GM12878 (cell line): ENCODE measurements at regions of chr20 and their contacts with region 1.

Region 1: DNA sequence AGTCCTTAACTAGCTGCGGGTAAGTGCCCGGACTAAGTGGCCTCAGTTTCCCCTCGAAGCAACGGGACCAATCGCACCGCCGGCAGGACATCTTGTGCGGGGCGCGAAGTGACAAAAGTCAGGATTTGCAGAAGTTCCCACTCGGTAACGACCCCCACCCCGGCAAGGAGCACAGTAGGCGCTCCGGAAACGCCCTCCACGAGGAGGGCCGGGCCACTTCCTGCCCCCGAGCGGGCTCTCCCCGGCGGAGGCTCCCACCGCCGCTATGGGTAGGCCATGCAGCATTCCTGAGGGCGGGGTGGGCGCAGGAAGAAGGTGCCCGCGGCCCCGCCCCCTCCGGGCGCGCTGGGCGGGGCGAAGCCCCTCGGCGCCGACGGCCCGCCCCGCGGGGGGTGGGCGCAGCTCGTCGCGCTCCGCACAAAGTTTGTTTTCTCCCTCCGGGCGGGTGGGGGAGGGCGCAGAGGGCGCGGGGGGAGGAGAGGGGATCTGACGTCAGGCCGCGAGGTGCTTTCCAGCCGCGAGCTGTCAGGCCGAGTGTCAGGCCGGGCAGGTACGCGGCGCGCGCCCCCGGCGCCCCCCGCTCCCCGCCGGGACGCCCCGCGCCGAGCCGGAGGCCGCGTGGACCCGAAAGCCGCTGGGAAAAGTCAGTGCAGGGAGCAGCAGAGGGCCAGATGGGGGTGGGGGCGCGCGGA is at the start of gene TGIF2:
- DNase-seq: peak; percentile 48
- ATAC-seq: peak; percentile 81
- H3K4me3 ChIP-seq: peak within 1 kb of the TSS; percentile 94
- H3K27ac ChIP-seq: peak within 1 kb of the TSS; percentile 96
- H3K4me1 ChIP-seq: peaks cover 5% of the 10 kb centered on the region
- H3K27me3 ChIP-seq: no peaks in the 10 kb centered on the region
- CTCF ChIP-seq: no peak
- EP300 ChIP-seq: 0 out of 4 replicates have a peak, but pooled peaks of 1 of the 2 experiments have one; percentile 27
- POLR2A ChIP-seq: peak; percentile 85
- RAD21 ChIP-seq: no peak
- polyA plus RNA-seq, gene TGIF2: 13.1 to 26.4 TPM

Region 2: GRCh38 chr20:36407199-36407733 is 166.0 kb before region 1 on chr20:
- CTCF ChIA-PET with region 1: no interaction called
- POLR2A ChIA-PET with region 1: no interaction called
- RAD21 ChIA-PET with region 1: no interaction called
- SMC1A ChIA-PET with region 1: no interaction called
- in situ Hi-C with region 1: no loop called
- intact Hi-C with region 1: no loop called
- DNase-seq: no peak
- ATAC-seq: no peak
- H3K4me3 ChIP-seq: no peak overlapping the region
- H3K27ac ChIP-seq: no peak overlapping the region
- H3K4me1 ChIP-seq: no peaks in the 10 kb centered on the region
- H3K27me3 ChIP-seq: no peaks in the 10 kb centered on the region
- CTCF ChIP-seq: no peak
- EP300 ChIP-seq: no peak
- POLR2A ChIP-seq: no peak
- RAD21 ChIP-seq: no peak

Region 3: GRCh38 chr20:36527331-36528125 is 45.7 kb before region 1 on chr20:
- CTCF ChIA-PET with region 1: no interaction called
- POLR2A ChIA-PET with region 1: no interaction called
- RAD21 ChIA-PET with region 1: no interaction called
- SMC1A ChIA-PET with region 1: no interaction called
- in situ Hi-C with region 1: no loop called
- intact Hi-C with region 1: no loop called
- DNase-seq: no peak
- ATAC-seq: no peak
- H3K4me3 ChIP-seq: no peak overlapping the region
- H3K27ac ChIP-seq: no peak overlapping the region
- H3K4me1 ChIP-seq: peaks cover 5% of the 10 kb centered on the region; the same call in 1 of the 2 replicates
- H3K27me3 ChIP-seq: no peaks in the 10 kb centered on the region
- CTCF ChIP-seq: no peak
- EP300 ChIP-seq: no peak
- POLR2A ChIP-seq: no peak
- RAD21 ChIP-seq: no peak

Region 4: GRCh38 chr20:36562724-36563123 is 10.5 kb before region 1 on chr20:
- CTCF ChIA-PET with region 1: interaction called, 6 read pairs
- POLR2A ChIA-PET with region 1: interaction called, 9 read pairs
- RAD21 ChIA-PET with region 1: interaction called, 4 read pairs
- SMC1A ChIA-PET with region 1: interaction called, 13 read pairs
- in situ Hi-C with region 1: no loop called
- intact Hi-C with region 1: no loop called
- DNase-seq: no peak
- ATAC-seq: no peak
- H3K4me3 ChIP-seq: no peak overlapping the region
- H3K27ac ChIP-seq: no peak overlapping the region
- H3K4me1 ChIP-seq: no peaks in the 10 kb centered on the region
- H3K27me3 ChIP-seq: no peaks in the 10 kb centered on the region
- CTCF ChIP-seq: no peak
- EP300 ChIP-seq: no peak
- POLR2A ChIP-seq: no peak
- RAD21 ChIP-seq: no peak

Region 5: DNA sequence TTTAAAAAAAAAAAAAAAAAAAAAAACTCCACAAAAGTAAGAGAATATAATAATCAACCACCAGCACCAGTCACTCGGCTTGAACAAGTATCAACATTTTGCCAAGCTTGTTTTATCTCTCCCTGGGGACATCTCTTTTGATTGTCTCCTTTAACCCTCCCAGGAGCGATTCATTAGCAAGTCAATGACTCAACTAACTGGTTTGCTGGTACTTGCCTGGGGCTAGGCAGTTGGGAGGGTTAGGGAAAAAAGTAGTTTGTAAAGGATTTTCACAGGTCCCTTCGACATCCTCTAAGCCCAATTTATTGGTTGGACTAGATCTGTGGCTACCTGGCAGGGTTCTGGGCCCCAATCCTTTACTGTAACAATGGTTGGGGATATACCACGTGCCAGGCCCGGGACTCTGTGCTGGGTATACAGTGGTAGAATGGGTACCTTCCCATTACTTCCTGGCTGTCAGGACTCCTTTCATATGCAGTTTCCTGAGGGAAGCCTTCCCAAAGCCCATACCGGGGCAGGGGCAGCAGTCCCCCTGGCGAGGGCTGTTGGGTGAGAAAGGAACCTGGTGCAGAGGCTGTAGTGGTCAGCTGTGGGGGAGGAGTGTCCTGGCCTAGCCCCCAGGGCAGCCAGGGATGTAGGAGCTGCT is 12.3 kb after region 1 on chr20:
- CTCF ChIA-PET with region 1: interaction called, 65 read pairs
- POLR2A ChIA-PET with region 1: interaction called, 46 read pairs
- RAD21 ChIA-PET with region 1: interaction called, 10 read pairs
- SMC1A ChIA-PET with region 1: interaction called, 98 read pairs
- in situ Hi-C with region 1: no loop called
- intact Hi-C with region 1: no loop called
- DNase-seq: no peak
- ATAC-seq: no peak
- H3K4me3 ChIP-seq: no peak overlapping the region
- H3K27ac ChIP-seq: no peak overlapping the region
- H3K4me1 ChIP-seq: peaks cover 5% of the 10 kb centered on the region
- H3K27me3 ChIP-seq: no peaks in the 10 kb centered on the region
- CTCF ChIP-seq: no peak
- EP300 ChIP-seq: no peak
- POLR2A ChIP-seq: no peak; the same call in 1 of the 2 replicates
- RAD21 ChIP-seq: no peak

Region 6: DNA sequence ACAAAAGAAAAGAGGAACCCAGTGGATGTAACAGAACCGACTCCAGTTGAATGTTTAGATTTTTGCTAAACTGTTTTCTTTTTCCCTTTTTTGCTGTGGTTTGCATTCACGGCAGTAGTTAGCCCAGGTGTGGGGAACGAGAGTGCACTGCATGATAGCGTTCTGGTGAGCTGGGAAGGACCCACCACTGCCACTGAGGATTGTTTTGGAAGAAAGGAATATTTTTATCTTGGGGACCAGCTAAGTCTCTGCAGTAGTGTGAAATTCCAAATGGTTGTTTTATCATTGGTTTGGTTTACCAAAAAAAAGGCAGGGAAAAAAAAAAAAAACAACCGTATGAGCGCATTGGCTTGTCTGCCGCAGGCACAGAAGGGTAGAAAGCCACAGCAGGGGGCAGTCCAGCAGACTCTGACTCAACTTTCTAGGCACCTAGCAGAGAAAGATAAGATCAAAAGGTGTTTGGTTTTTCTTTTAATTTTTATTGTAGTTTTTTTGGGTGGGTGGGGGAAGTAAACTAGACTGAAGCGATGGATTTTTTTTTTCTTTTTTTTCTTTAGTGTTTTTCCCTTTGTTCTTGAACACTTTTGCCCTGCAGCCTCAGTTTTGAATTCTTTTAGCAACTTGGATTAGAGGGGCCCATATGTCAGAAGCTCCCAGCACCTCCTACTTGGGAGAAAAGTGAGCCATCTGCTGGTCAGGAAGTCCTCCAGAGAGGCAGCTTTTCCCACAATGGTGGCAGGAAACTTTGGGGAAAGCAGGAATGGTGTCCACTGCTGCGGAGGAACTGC is 18.8 kb after region 1 on chr20:
- CTCF ChIA-PET with region 1: interaction called, 65 read pairs
- POLR2A ChIA-PET with region 1: interaction called, 87 read pairs
- RAD21 ChIA-PET with region 1: interaction called, 93 read pairs
- SMC1A ChIA-PET with region 1: interaction called, 98 read pairs
- in situ Hi-C with region 1: no loop called
- intact Hi-C with region 1: loop called (anchors 2 kb)
- DNase-seq: no peak
- ATAC-seq: no peak
- H3K4me3 ChIP-seq: no peak overlapping the region
- H3K27ac ChIP-seq: no peak overlapping the region
- H3K4me1 ChIP-seq: peaks cover 41% of the 10 kb centered on the region
- H3K27me3 ChIP-seq: no peaks in the 10 kb centered on the region
- CTCF ChIP-seq: peak in 2 of 3 experiments; percentile 23 to 43; a peak in 3 of 6 replicates
- EP300 ChIP-seq: no peak
- POLR2A ChIP-seq: no peak
- RAD21 ChIP-seq: no peak

Region 7: GRCh38 chr20:36599912-36600345 is 26.7 kb after region 1 on chr20:
- CTCF ChIA-PET with region 1: interaction called, 94 read pairs
- POLR2A ChIA-PET with region 1: interaction called, 87 read pairs
- RAD21 ChIA-PET with region 1: interaction called, 93 read pairs
- SMC1A ChIA-PET with region 1: interaction called, 98 read pairs
- in situ Hi-C with region 1: no loop called
- intact Hi-C with region 1: loop called (anchors 1 kb)
- DNase-seq: peak; percentile 40
- ATAC-seq: peak; percentile 20
- H3K4me3 ChIP-seq: no peak overlapping the region
- H3K27ac ChIP-seq: peak overlapping the region; percentile 80
- H3K4me1 ChIP-seq: peaks cover 43% of the 10 kb centered on the region
- H3K27me3 ChIP-seq: no peaks in the 10 kb centered on the region
- CTCF ChIP-seq: no peak
- EP300 ChIP-seq: no peak
- POLR2A ChIP-seq: no peak
- RAD21 ChIP-seq: no peak

Region 8: DNA sequence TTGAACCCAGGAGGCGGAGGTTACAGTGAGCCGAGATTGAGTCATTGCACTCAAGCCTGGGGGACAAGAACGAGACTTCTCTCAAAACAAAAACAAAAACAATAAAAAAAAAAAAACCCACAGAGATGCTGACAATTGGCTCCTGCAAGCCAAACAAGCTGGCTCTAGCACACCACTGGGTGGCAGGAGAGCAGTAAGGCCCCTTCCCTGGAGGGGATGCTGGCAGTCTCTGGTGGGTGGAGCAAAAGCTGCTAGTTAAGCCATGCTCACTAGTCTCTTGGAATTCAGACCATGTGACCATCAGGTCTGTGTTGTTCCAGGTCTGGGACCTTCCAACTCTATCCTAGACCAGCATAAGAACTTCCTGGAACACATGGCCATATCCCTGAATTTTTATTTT is 219.2 kb after region 1 on chr20:
- CTCF ChIA-PET with region 1: no interaction called
- POLR2A ChIA-PET with region 1: no interaction called
- RAD21 ChIA-PET with region 1: no interaction called
- SMC1A ChIA-PET with region 1: no interaction called
- in situ Hi-C with region 1: no loop called
- intact Hi-C with region 1: no loop called
- DNase-seq: no peak
- ATAC-seq: peak; percentile 87
- H3K4me3 ChIP-seq: no peak overlapping the region
- H3K27ac ChIP-seq: no peak overlapping the region
- H3K4me1 ChIP-seq: peaks cover 7% of the 10 kb centered on the region; the same call in 1 of the 2 replicates
- H3K27me3 ChIP-seq: no peaks in the 10 kb centered on the region
- CTCF ChIP-seq: peak; percentile 36 to 49 (median 47); a peak in 5 of 6 replicates
- EP300 ChIP-seq: no peak
- POLR2A ChIP-seq: no peak
- RAD21 ChIP-seq: peak; percentile 57